ENCODE measurements at regions of chr12 and their contacts with region 1.

Region 1: DNA sequence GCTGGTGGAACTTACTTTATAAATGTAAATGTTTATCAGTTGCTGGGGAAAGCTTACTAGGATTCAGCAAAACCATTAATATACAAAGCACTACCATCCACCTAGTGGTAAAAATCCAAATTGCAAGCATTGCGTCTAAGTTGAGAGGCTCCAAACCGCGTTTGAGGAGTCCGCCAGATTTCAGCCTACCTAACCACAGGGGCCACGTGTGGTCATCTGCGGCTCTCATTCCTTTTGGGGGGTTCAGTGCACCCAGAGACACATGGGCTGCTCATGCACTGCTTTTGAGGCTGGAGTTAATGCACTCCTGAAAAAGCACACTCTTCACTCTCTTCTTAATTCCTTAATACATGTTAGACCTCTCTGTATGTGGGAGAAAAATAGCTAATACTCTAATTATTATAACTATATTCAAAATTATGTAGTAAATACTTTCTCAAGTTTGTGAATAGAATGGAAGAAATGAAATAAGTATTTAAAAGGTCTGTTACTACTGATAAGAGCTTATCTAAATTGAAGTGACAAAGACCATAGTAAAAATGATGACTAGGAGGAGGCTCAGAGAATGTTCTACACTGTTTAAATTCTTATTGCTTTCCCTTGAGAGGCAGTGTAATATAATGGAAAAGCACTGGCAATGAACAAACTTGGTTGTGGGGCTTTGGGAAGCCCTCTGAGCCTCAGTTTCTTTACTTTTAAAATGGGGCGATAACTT is 41.4 kb upstream of the MANSC4 start:
- DNase-seq: peak; percentile 33
- H3K4me3 Mint-ChIP-seq: peak overlapping the region; percentile 32
- H3K27ac Mint-ChIP-seq: peak overlapping the region; percentile 91
- H3K4me1 Mint-ChIP-seq: peaks cover 71% of the 10 kb centered on the region
- H3K27me3 Mint-ChIP-seq: peaks cover 22% of the 10 kb centered on the region

Region 2: DNA sequence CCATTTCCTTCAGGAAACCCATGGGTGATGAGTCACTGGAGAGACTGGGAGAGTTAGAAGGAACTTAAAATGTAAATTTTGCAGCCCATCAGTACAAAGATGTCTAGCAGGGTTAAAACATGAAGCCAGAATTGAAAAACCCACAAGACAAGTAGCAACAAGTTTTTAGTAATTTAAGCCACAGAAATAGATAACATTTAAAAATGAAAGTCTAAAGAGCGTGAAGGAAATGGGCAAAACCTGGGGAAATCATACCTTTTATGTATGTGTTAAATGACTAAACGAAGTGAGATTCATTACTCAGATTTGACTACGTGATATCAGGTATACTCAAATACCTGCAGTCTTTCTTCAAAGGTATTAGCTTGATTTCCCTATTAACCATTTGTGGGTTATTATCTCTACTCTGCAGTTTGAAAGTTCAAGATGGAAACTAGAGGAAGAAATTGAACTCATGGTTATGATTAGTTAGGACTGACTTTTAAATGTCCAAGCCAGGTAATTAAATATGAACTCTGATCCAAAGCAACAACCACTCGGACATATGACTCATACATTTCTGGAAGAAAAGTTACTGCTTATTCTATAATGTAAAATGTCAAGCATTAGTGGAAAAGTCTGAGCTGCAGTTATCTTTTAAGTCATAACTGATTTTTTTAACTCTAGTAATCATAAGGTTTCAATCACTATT is 1072.5 kb before region 1 on chr12:
- intact Hi-C with region 1: loop called (anchors 2 kb)
- DNase-seq: no peak
- H3K4me3 Mint-ChIP-seq: peak overlapping the region; percentile 40
- H3K27ac Mint-ChIP-seq: peak overlapping the region; percentile 70
- H3K4me1 Mint-ChIP-seq: peaks cover 53% of the 10 kb centered on the region
- H3K27me3 Mint-ChIP-seq: no peaks in the 10 kb centered on the region

Region 3: DNA sequence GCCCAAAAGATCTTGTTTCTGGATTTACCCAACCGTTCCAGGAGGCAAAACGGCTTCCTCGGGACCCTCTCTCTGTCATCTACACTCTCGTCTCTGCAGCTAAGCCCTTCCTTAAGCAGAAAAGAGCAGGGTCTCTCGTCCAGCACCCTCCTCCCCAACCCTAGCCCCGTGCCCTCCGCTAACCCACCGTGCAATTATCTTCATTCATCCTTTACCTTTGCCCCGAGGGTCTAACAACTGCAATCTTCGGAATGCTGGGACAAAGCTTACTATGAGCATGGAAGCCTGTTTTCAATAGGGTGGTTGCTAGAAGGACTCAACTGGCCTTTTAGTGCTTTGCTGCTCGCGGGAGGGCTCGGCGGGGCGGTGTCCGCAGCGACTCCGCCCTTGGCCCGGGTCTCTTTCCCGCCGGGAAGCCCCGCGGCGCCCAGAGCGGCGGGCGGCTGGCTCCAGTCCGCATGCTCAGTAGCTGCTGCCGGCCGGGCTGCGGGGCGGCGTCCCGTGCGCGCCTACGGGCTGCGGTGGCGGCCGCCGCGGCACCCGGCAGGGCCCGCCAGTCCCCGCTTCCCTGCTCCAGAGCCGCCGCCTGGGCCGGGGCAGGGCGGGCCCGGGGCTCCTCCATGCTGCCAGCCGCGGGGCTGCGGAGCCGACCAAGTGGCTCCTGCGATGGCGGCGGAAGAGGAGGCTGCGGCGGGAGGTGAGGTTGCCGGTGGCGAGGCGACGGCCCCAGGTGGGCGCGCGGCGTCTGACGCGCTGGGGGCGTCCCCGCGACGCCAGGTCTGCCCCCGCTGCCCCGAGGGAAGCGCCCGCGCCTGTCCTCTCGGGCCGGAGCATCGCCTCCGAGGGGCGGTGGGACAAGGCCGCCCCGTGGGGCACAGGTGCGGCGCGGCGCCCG is 488.8 kb before region 1 on chr12 and contains the start of gene BMAL2:
- intact Hi-C with region 1: loop called (anchors 1 kb)
- DNase-seq: peak; percentile 46
- H3K4me3 Mint-ChIP-seq: peak within 1 kb of the TSS; percentile 99
- H3K27ac Mint-ChIP-seq: peak within 1 kb of the TSS; percentile 96
- H3K4me1 Mint-ChIP-seq: peaks cover 67% of the 10 kb centered on the region
- H3K27me3 Mint-ChIP-seq: no peaks in the 10 kb centered on the region
- total RNA-seq, gene BMAL2: 57.2 and 58.0 TPM in 2 replicates

Region 4: DNA sequence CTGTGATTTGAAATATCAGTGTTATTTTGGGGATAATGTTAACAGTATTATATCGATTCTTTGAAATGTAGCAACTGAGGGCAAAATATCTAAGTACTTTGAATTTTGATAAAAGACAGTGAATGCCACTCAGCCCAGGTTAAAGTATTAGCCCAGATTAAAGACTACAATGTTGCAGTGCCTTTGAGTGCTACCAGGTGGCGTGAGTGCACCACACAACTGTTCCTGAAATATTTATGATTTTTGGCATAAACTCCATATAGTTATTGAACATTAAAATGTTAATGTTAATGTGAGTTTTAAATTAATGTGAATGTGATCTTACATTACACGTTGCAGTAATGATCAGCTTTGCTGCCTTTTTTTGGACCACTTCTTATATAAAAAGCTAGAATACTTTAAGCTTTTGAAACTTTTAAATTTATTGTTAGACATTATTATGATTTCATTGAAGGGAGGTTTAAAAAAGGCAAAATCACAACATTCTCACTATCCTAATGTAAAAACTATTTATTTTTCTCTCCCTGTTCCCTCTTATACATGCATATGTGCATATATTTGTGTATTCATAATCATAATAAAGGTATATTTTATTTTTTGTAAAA is 88.3 kb before region 1 on chr12:
- intact Hi-C with region 1: loop called (anchors 1 kb)
- DNase-seq: no peak
- H3K4me3 Mint-ChIP-seq: no peak overlapping the region
- H3K27ac Mint-ChIP-seq: no peak overlapping the region
- H3K4me1 Mint-ChIP-seq: no peaks in the 10 kb centered on the region
- H3K27me3 Mint-ChIP-seq: no peaks in the 10 kb centered on the region

Region 5: GRCh38 chr12:27870939-27871338 is 49.5 kb after region 1 on chr12:
- intact Hi-C with region 1: loop called (anchors 1 kb)
- DNase-seq: no peak
- H3K4me3 Mint-ChIP-seq: no peak overlapping the region
- H3K27ac Mint-ChIP-seq: no peak overlapping the region
- H3K4me1 Mint-ChIP-seq: peaks cover 9% of the 10 kb centered on the region
- H3K27me3 Mint-ChIP-seq: no peaks in the 10 kb centered on the region

Region 6: GRCh38 chr12:28082096-28082495 is 260.7 kb after region 1 on chr12:
- intact Hi-C with region 1: no loop called
- DNase-seq: no peak
- H3K4me3 Mint-ChIP-seq: no peak overlapping the region
- H3K27ac Mint-ChIP-seq: no peak overlapping the region
- H3K4me1 Mint-ChIP-seq: no peaks in the 10 kb centered on the region
- H3K27me3 Mint-ChIP-seq: peaks cover 3% of the 10 kb centered on the region

Region 7: DNA sequence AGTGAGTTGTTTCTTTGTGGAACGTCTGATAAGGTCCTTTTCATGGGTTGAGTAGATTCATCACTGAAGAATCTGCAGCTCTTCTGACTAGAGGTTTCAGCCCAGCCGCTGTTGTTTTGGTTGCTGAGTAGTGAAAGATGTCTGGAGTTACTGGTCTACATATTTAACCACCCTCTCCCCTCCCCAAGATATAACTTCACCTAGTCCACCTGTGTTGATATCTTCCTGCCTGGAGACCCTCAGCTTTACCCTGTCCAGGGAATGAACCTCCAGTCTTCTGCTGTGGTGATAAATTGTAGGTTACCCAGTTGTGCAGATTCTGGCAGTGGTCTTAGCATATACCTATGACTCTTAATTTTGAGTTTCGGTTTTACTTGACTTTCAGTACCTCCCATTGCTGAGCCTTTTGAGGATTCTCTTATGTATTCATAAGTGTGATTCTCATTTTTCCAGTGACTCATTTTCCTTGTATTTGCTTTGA is 431.8 kb after region 1 on chr12:
- intact Hi-C with region 1: loop called (anchors 1 kb)
- DNase-seq: peak; percentile 18
- H3K4me3 Mint-ChIP-seq: peak overlapping the region; percentile 74
- H3K27ac Mint-ChIP-seq: peak overlapping the region; percentile 97
- H3K4me1 Mint-ChIP-seq: peaks cover 48% of the 10 kb centered on the region
- H3K27me3 Mint-ChIP-seq: no peaks in the 10 kb centered on the region

Region 8: DNA sequence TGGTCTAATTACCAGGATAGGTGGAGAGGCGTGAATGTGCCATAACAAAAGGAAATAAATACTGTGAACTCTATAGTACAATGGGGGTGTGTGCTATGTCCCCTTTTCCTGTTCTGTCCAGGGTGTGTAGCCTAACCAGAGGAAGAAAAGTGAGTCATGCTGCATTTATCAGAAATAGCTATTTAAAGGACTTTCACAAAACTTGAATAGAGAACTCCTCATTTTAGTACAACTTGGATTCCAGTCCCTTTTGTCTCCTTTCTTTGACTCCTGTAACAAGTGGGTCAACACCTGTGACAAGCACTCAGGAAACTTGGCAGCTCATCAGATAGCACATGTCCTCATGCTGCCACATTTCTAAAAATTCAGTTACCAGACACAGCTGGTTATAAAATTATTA is 492.2 kb after region 1 on chr12:
- intact Hi-C with region 1: no loop called
- DNase-seq: no peak
- H3K4me3 Mint-ChIP-seq: no peak overlapping the region
- H3K27ac Mint-ChIP-seq: no peak overlapping the region
- H3K4me1 Mint-ChIP-seq: no peaks in the 10 kb centered on the region
- H3K27me3 Mint-ChIP-seq: no peaks in the 10 kb centered on the region

Measured in activated T-helper 1 cell treated with anti-CD3 and anti-CD28 coated beads, Interleukin-12 subunit alpha, Interleukin-12 subunit beta, Interleukin-2, Interleukin-4 antibody, amounts not matched to agents 30 ng/mL and 10 ng/mL and 1 ng/mL, durations not matched to agents 14 hours and 24 hours and 36 hours (primary cell).